Head of caudate nucleus (tissue), 42 donors: ENCODE measurements at regions of chr4 and their contacts with region 1.

Region 1: GRCh38 chr4:110516106-110516922 is 40.4 kb downstream of the ENPEP start:
- DNase-seq: peak; percentile 59 to 91 (median 79)

Region 2: GRCh38 chr4:110211007-110211769 is 305.1 kb before region 1 on chr4:
- intact Hi-C with region 1: loop called (anchors 10 kb)
- DNase-seq: peak in 3 of 42 donors; percentile 12 to 50 (median 35)